Caco-2 (cell line): ENCODE measurements at regions of chr6 and their contacts with region 1.

Region 1: GRCh38 chr6:165055231-165055630 is 254.2 kb downstream of the C6orf118 start:
- DNase-seq: no peak
- H3K4me3 ChIP-seq: no peak overlapping the region
- H3K4me3 Mint-ChIP-seq: no peak overlapping the region
- H3K27ac Mint-ChIP-seq: no peak overlapping the region
- H3K4me1 ChIP-seq: 0 out of 2 replicates have a peak, but pooled peaks cover 3% of the 10 kb centered on the region
- H3K4me1 Mint-ChIP-seq: no peaks in the 10 kb centered on the region
- H3K27me3 ChIP-seq: no peaks in the 10 kb centered on the region
- H3K27me3 Mint-ChIP-seq: no peaks in the 10 kb centered on the region
- CTCF ChIP-seq: no peak

Region 2: GRCh38 chr6:164106345-164106769 is 948.9 kb before region 1 on chr6:
- CTCF ChIA-PET with region 1: no interaction called
- POLR2A ChIA-PET with region 1: no interaction called
- intact Hi-C with region 1: no loop called
- DNase-seq: no peak
- H3K4me3 ChIP-seq: no peak overlapping the region
- H3K4me3 Mint-ChIP-seq: no peak overlapping the region
- H3K27ac Mint-ChIP-seq: no peak overlapping the region
- H3K4me1 ChIP-seq: no peaks in the 10 kb centered on the region
- H3K4me1 Mint-ChIP-seq: peaks cover 8% of the 10 kb centered on the region
- H3K27me3 ChIP-seq: no peaks in the 10 kb centered on the region
- H3K27me3 Mint-ChIP-seq: no peaks in the 10 kb centered on the region
- CTCF ChIP-seq: no peak

Region 3: DNA sequence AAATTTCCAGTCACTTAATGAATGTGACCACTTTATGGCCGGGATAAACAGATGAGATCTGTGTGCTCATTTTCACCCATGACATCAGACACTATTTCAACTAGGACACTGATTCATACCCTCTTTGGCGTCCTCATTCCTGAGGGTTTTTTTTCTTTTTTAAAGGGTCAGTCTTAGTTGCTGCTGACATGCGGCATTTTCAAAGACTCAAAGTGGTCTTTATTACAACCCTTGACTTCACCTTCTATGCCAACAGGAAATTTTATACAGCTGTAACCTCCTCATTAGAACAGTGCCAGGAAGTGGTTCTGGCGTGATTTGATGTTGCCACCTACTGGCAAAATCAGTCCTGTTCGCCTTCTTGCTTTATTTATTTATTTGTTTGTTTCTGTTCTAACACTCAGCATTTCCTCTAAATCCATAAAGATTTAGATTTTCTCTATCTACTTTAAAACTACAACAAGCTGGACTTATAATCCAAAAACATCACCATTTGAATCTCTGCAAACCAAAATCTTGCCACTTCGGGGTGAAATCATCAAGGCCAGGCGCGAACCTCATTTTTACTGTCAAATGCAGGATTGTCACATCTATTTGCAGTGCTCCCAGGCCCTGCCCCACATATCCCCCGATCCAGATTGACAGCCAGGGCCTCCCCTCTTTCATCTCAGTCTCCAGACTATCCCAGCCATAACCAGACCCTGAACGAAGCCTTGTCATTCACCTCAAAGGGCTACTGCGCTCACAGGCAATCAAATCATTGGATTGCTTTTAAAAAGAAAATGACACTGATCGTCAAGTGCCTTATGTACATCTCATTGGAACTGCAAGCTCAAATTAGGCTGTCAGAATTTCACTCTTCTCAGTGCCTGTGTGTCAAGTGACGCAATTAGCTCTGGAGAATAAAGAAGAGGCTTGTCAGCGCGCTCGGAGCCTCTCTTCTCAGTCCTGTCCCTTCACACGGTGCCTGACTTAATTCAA is 176.6 kb after region 1 on chr6:
- CTCF ChIA-PET with region 1: interaction called, 6 read pairs
- POLR2A ChIA-PET with region 1: no interaction called
- intact Hi-C with region 1: loop called (anchors 2 kb)
- DNase-seq: peak in 1 of 2 experiments; percentile 12
- H3K4me3 ChIP-seq: no peak overlapping the region
- H3K4me3 Mint-ChIP-seq: no peak overlapping the region
- H3K27ac Mint-ChIP-seq: no peak overlapping the region
- H3K4me1 ChIP-seq: no peaks in the 10 kb centered on the region
- H3K4me1 Mint-ChIP-seq: no peaks in the 10 kb centered on the region
- H3K27me3 ChIP-seq: no peaks in the 10 kb centered on the region
- H3K27me3 Mint-ChIP-seq: no peaks in the 10 kb centered on the region
- CTCF ChIP-seq: peak; percentile 19 to 24